ENCODE measurements at regions of chr20 and their contacts with region 1.

Region 1: GRCh38 chr20:63830841-63831588 is at the start of gene ZBTB46:
- DNase-seq: peak; percentile 62 to 86 (median 80)
- ATAC-seq: peak in 3 of 4 donors; percentile 11 to 44 (median 28)
- H3K4me3 ChIP-seq: peak within 1 kb of the TSS; percentile 48 to 99 (median 79)
- H3K27ac ChIP-seq: peak within 1 kb of the TSS; percentile 80 to 97 (median 90)
- H3K4me1 ChIP-seq: peaks cover 13 to 77% (median 60%) of the 10 kb centered on the region in 12 donors
- H3K27me3 ChIP-seq: peaks cover 0 to 27% (median 0%) of the 10 kb centered on the region in 9 donors
- CTCF ChIP-seq: no peak
- POLR2A ChIP-seq: peak in 1 of 2 donors; percentile 10
- total RNA-seq, gene ZBTB46: 11.2 to 27.4 (median 14.4) TPM

Region 2: DNA sequence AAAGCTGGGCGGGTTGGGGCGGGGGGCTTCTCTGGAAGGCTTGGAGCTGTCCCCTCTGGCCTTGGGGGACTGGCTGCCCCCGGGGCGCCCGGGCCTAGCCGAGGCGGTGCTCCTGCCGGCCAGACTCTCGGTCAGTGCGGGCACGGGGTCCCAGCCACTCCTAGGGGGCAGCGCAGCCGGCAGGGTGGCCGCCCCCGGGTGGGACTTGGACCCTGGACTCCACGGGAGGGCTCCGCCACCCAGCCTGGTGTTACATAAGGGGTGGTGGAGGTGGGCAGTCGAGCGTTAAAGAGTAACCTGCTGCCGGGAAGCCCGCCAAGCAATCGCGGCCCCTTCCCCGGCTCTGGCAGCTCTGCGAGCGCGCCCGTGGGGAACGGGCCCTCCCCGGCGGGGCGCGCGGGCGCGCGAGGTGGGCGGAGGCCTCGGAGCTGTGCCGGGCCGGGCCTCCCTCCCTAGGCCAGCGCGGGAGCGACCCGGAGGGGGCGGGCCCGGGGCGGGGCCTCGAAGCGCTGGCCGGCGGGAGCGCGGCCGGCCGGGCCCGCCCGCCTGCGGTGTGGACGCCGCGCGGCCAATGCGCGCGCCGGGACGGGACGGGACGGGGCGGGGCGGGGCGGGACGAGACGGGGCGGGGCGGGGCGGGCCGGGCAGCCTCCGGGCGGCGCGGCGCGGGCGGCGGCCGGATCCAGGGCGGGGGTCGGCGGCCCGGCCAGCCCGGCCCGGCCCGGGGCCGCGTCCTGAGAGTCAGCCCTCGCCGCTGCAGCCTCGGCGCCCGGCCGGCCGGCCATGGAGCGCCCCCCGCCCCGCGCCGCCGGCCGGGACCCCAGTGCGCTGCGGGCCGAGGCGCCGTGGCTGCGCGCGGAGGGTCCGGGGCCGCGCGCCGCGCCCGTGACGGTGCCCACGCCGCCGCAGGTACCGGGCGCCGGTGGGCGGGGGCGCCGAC is 91.6 kb before region 1 on chr20 and contains the start of gene SLC2A4RG:
- intact Hi-C with region 1: loop called in 1 of 10 experiments (anchors 5 kb)
- DNase-seq: peak; percentile 81 to 92 (median 87)
- ATAC-seq: peak; percentile 50 to 73 (median 63)
- H3K4me3 ChIP-seq: peak within 1 kb of the TSS; percentile 51 to 95 (median 68)
- H3K27ac ChIP-seq: peak within 1 kb of the TSS; percentile 87 to 100 (median 96)
- H3K4me1 ChIP-seq: peaks cover 9 to 46% (median 35%) of the 10 kb centered on the region in 12 donors
- H3K27me3 ChIP-seq: no peaks in the 10 kb centered on the region
- CTCF ChIP-seq: no peak
- POLR2A ChIP-seq: no peak
- total RNA-seq, gene SLC2A4RG: 41.4 to 82.5 (median 70.7) TPM

Region 3: DNA sequence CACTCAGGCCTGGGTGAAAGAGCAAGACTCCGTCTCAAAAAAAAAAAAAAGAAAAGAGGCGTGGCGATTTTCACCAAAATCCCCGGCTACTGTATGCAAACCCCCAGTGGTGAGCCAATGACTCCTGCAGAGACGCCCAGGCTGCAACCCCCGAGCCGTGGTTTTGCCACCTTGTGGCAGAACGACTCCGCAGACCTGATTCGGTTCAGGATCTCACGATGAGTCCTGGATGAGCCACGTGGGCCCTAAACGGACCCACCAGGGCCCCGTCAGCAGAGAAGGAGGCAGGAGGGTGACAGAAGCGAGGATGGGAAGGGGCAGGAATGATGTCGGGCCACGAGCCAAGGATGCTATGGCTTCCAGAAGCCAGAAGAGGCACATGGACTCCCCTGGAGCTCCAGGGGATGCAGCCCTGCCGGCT is 49.0 kb before region 1 on chr20:
- intact Hi-C with region 1: loop called in 3 of 10 experiments (anchors 5 kb)
- DNase-seq: peak in 1 of 5 donors; percentile 58
- ATAC-seq: no peak
- H3K4me3 ChIP-seq: no peak overlapping the region
- H3K27ac ChIP-seq: no peak overlapping the region
- H3K4me1 ChIP-seq: peaks cover 0 to 22% (median 15%) of the 10 kb centered on the region in 12 donors
- H3K27me3 ChIP-seq: no peaks in the 10 kb centered on the region
- CTCF ChIP-seq: no peak
- POLR2A ChIP-seq: no peak

Region 4: DNA sequence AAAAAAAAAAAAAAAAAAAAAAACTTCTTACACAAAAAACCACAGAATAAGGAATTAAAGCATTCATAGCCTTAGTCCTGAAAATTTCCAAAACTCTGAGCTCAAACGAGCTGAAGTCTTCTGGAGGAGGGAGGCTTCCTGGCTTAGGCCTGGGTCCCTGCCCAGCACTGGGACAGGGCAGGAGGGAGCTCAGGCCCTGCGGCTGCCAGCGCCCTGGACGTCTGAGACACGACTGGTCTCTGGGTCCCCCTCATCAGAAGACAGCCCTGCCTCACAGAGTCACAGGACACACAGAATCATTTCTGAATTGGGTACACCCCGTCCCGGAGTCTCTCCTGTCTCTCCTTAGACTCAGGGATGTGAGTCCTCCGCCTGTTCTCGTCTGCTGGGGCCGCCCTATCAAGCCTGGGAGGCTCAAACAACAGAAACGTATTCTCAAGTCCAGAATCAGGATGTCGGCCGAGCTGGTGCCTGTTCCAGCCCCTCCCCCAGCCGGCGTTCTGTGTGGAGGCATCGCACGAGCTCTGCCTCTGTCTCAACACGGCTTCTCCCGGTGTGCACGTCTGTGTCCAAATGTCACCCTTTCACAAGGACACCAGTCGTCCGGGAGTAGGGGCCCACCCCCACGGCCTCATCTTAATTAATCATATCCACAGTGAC is 39.4 kb before region 1 on chr20:
- intact Hi-C with region 1: loop called in 8 of 10 experiments (anchors 5 kb)
- DNase-seq: peak in 3 of 5 donors; percentile 75 to 81 (median 81)
- ATAC-seq: peak; percentile 19 to 51 (median 32)
- H3K4me3 ChIP-seq: peak overlapping the region in 5 of 12 donors; percentile 1 to 12 (median 4)
- H3K27ac ChIP-seq: peak overlapping the region; percentile 57 to 88 (median 74)
- H3K4me1 ChIP-seq: peaks cover 4 to 65% (median 46%) of the 10 kb centered on the region in 12 donors
- H3K27me3 ChIP-seq: no peaks in the 10 kb centered on the region
- CTCF ChIP-seq: no peak
- POLR2A ChIP-seq: no peak

Region 5: DNA sequence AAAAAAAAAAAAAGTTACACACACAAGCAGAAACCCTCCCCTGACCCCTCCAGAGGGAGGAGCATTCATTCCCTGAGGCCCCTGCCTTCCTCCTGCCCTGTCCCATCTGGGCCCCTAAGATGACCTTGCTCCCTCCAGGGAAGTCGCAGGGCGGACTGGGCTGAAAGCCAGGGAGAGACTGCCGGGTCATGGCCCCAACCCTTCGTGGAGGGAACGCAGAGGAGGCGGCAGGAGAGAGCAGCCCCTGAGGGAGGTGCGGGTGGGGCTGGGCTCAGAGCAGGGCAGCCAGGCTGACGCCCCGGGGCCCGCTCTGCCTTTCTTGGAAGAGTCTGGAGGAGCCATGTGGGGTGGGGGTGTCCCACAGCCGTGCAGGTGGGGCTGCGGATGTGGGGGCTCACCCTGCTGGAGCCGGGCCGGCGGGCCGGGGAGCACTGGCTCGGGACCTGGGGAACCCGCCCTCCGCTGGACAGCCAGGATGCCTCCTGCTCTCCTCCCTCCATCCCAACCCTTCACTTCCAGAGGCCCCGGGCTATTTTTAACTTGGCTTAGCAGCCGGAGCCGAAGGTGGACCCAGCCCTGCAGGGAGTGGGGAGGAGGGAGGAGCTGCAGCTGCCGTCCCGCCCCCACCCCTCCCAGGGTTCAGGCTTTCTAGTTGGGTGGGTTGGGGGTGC is 15.2 kb after region 1 on chr20:
- intact Hi-C with region 1: loop called in 1 of 10 experiments (anchors 2 kb)
- DNase-seq: peak; percentile 85 to 91 (median 90)
- ATAC-seq: peak; percentile 79 to 87 (median 84)
- H3K4me3 ChIP-seq: peak overlapping the region in 11 of 12 donors; percentile 3 to 50 (median 43)
- H3K27ac ChIP-seq: peak overlapping the region; percentile 71 to 96 (median 84)
- H3K4me1 ChIP-seq: peaks cover 0 to 53% (median 44%) of the 10 kb centered on the region in 12 donors
- H3K27me3 ChIP-seq: peaks cover 0 to 33% (median 0%) of the 10 kb centered on the region in 9 donors
- CTCF ChIP-seq: peak in 3 of 12 donors; percentile 7 to 37 (median 20)
- POLR2A ChIP-seq: no peak

Region 6: GRCh38 chr20:64203037-64203777 is 372.2 kb after region 1 on chr20:
- intact Hi-C with region 1: no loop called
- DNase-seq: no peak
- ATAC-seq: peak in 2 of 4 donors; percentile 22 to 34
- H3K4me3 ChIP-seq: no peak overlapping the region
- H3K27ac ChIP-seq: no peak overlapping the region
- H3K4me1 ChIP-seq: no peaks in the 10 kb centered on the region
- H3K27me3 ChIP-seq: peaks cover 0 to 17% (median 3%) of the 10 kb centered on the region in 9 donors
- CTCF ChIP-seq: no peak
- POLR2A ChIP-seq: no peak